Posterior vena cava (tissue), 2 donors: ENCODE measurements at regions of chr14 and their contacts with region 1.

Region 1: DNA sequence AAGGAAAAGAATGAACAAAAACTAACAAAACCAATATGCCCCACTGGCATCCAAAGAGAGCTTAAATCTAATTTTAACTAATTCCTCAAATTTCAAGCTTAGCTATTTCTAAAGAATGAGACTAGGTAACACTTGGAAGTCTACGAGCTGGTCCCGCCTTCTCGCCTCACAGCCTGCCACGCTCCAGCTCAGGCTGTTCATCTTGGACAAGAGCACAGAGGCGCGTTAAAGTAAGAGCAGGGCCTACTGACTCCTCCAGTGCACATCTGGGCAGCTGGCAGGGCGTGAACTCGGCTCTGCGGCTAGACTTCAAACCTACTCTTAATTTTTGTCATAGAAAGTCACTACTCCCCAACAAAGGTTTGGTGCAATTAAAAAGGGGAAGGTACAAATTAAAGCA is 64.6 kb downstream of the DICER1 start:
- DNase-seq: no peak

Region 2: GRCh38 chr14:94839348-94840000 is 253.2 kb before region 1 on chr14:
- intact Hi-C with region 1: loop called in 1 of 2 experiments (anchors 5 kb)
- DNase-seq: no peak